PC-3 (cell line): ENCODE measurements at regions of chr2 and their contacts with region 1.

Region 1: GRCh38 chr2:204325468-204325867 is 219.8 kb upstream of the PARD3B start:
- DNase-seq: peak; percentile 87
- ATAC-seq: peak; percentile 74
- H3K4me3 ChIP-seq: no peak overlapping the region
- H3K27ac ChIP-seq: no peak overlapping the region
- H3K4me1 ChIP-seq: peaks cover 22% of the 10 kb centered on the region
- H3K27me3 ChIP-seq: no peaks in the 10 kb centered on the region
- CTCF ChIP-seq: peak; percentile 92

Region 2: GRCh38 chr2:204260162-204260877 is 65.1 kb before region 1 on chr2:
- CTCF ChIA-PET with region 1: interaction called, 5 read pairs
- POLR2A ChIA-PET with region 1: no interaction called
- intact Hi-C with region 1: loop called (anchors 5 kb)
- DNase-seq: peak; percentile 84
- ATAC-seq: peak; percentile 82
- H3K4me3 ChIP-seq: no peak overlapping the region
- H3K27ac ChIP-seq: no peak overlapping the region
- H3K4me1 ChIP-seq: peaks cover 12% of the 10 kb centered on the region
- H3K27me3 ChIP-seq: 0 out of 2 replicates have a peak, but pooled peaks cover 2% of the 10 kb centered on the region
- CTCF ChIP-seq: peak; percentile 93

Region 3: DNA sequence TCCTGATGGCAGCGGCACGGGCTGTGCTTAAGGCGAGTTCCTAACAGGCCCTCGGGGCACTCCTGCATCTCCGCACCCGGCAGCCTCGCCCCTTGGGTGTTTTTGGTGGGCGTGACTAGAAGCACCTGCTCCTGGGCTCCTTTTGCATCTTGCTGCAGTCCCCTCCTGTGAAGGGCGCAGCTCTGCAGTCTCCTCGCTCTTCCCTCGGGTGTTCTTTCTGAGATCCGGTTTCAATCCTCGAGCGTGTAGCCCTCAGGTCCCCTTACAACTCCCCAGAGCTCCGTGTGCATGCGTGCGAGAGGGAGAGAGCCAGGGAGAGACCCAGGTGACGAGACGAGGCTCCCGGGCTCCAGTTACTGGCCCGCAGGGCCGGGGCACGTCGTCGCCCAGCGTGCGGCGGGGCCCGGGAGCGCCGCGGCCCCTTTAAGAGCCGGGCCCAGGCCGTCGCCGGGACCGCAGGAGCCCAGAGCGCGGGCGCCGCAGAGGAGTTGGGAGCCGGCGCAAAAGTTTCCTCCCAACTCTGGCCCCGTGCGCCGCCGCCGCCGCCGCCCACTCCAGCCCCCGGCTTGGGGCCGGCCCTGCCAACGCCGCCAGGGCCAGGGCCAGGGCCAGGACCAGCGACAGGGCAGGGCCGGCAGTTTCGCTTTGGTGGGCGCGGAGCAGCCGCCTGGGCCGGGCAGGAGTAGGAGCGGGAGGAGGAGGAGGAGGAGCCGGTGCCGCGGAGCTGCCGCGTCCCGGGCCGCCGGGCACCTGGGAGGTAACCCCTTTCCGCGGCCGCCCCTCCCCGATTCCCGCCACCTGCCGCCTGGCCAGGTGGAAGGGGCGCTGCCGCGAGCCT is 219.8 kb after region 1 on chr2 and contains the start of gene PARD3B:
- CTCF ChIA-PET with region 1: no interaction called
- POLR2A ChIA-PET with region 1: no interaction called
- intact Hi-C with region 1: loop called (anchors 2 kb)
- DNase-seq: peak; percentile 74
- ATAC-seq: peak; percentile 84
- H3K4me3 ChIP-seq: peak within 1 kb of the TSS; percentile 80
- H3K27ac ChIP-seq: peak within 1 kb of the TSS; percentile 49
- H3K4me1 ChIP-seq: peaks cover 20% of the 10 kb centered on the region
- H3K27me3 ChIP-seq: no peaks in the 10 kb centered on the region
- CTCF ChIP-seq: no peak
- total RNA-seq, gene PARD3B: 3.9 and 10.9 TPM in 2 replicates

Region 4: DNA sequence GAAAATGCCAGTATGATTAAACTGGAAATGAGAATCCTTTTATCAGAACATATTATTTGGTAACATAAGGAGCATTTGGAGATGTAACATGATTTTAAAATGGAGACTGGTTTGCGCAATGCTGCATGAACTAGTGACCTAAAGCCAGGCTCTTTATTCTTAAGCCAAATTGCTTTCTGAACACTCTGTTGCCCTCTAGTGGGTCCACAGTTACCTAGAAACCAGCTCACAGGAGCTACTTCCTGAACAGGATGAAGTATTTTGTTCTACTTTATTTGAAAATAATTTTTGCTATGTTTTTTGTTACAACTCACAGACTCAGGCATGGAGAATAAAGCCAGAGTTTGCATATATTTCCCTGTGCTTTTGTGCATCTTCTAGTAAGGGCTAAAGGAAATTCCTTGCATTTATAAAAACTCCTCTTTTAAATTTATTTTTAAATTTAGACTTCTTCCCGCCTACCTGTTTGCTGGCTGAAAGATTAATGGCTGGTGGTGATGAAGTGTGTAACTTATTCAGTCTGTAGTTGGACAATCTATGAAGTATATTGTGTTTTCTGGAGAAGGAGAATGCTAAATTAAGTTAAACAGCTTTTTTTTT is 366.5 kb after region 1 on chr2:
- CTCF ChIA-PET with region 1: interaction called, 3 read pairs
- POLR2A ChIA-PET with region 1: no interaction called
- intact Hi-C with region 1: loop called (anchors 1 kb)
- DNase-seq: peak; percentile 88
- ATAC-seq: peak; percentile 84
- H3K4me3 ChIP-seq: no peak overlapping the region
- H3K27ac ChIP-seq: no peak overlapping the region
- H3K4me1 ChIP-seq: no peaks in the 10 kb centered on the region
- H3K27me3 ChIP-seq: no peaks in the 10 kb centered on the region
- CTCF ChIP-seq: peak; percentile 89

Region 5: GRCh38 chr2:204871231-204871953 is 545.9 kb after region 1 on chr2:
- CTCF ChIA-PET with region 1: no interaction called
- POLR2A ChIA-PET with region 1: no interaction called
- intact Hi-C with region 1: loop called (anchors 2 kb)
- DNase-seq: peak; percentile 57
- ATAC-seq: peak; percentile 80
- H3K4me3 ChIP-seq: no peak overlapping the region
- H3K27ac ChIP-seq: no peak overlapping the region
- H3K4me1 ChIP-seq: no peaks in the 10 kb centered on the region
- H3K27me3 ChIP-seq: no peaks in the 10 kb centered on the region
- CTCF ChIP-seq: peak; percentile 67